ENCODE measurements at regions of chr6 and their contacts with region 1.

Region 1: GRCh38 chr6:75775219-75775618 is 26.2 kb downstream of the MYO6 start:
- DNase-seq: peak; percentile 19
- ATAC-seq: peak; percentile 48; the same call in 1 of the 2 replicates
- H3K4me3 ChIP-seq: no peak overlapping the region
- H3K27ac ChIP-seq: no peak overlapping the region
- H3K4me1 ChIP-seq: peaks cover 3% of the 10 kb centered on the region; the same call in 1 of the 2 replicates
- H3K27me3 ChIP-seq: no peaks in the 10 kb centered on the region
- CTCF ChIP-seq: no peak
- POLR2A ChIP-seq: no peak
- RAD21 ChIP-seq: no peak

Region 2: DNA sequence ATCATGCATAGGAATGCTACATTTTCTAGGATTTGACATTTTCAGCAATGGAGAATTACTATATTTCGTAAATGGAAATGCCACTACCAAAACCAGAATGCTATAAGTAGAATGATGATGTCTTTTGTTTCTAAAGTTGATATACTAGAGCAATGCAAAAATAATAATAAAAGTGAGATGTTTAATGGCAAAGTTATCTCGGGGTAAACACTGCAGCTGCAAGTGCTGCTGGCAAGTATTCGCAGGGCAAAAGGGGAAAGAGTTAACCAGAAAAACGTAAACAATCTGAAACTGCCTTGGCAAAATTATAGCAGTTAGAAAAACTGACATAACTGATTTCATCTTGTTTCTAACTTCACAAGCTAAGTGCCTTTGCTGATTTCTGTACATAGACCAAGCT is 236.1 kb before region 1 on chr6:
- CTCF ChIA-PET with region 1: no interaction called
- POLR2A ChIA-PET with region 1: no interaction called
- dilution Hi-C with region 1: no loop called
- in situ Hi-C with region 1: no loop called
- intact Hi-C with region 1: no loop called
- DNase-seq: peak; percentile 60
- ATAC-seq: peak; percentile 87
- H3K4me3 ChIP-seq: no peak overlapping the region
- H3K27ac ChIP-seq: no peak overlapping the region
- H3K4me1 ChIP-seq: no peaks in the 10 kb centered on the region; the same call in none of the 2 replicates
- H3K27me3 ChIP-seq: no peaks in the 10 kb centered on the region; the same call in 1 of the 2 replicates
- CTCF ChIP-seq: no peak
- POLR2A ChIP-seq: no peak
- RAD21 ChIP-seq: no peak

Region 3: GRCh38 chr6:75746221-75746620 is 29.0 kb before region 1 on chr6:
- CTCF ChIA-PET with region 1: no interaction called
- POLR2A ChIA-PET with region 1: no interaction called
- dilution Hi-C with region 1: no loop called
- in situ Hi-C with region 1: no loop called
- intact Hi-C with region 1: no loop called
- DNase-seq: no peak
- ATAC-seq: no peak
- H3K4me3 ChIP-seq: no peak overlapping the region
- H3K27ac ChIP-seq: no peak overlapping the region
- H3K4me1 ChIP-seq: no peaks in the 10 kb centered on the region
- H3K27me3 ChIP-seq: peaks cover 4% of the 10 kb centered on the region
- CTCF ChIP-seq: no peak
- POLR2A ChIP-seq: no peak
- RAD21 ChIP-seq: no peak

Region 4: DNA sequence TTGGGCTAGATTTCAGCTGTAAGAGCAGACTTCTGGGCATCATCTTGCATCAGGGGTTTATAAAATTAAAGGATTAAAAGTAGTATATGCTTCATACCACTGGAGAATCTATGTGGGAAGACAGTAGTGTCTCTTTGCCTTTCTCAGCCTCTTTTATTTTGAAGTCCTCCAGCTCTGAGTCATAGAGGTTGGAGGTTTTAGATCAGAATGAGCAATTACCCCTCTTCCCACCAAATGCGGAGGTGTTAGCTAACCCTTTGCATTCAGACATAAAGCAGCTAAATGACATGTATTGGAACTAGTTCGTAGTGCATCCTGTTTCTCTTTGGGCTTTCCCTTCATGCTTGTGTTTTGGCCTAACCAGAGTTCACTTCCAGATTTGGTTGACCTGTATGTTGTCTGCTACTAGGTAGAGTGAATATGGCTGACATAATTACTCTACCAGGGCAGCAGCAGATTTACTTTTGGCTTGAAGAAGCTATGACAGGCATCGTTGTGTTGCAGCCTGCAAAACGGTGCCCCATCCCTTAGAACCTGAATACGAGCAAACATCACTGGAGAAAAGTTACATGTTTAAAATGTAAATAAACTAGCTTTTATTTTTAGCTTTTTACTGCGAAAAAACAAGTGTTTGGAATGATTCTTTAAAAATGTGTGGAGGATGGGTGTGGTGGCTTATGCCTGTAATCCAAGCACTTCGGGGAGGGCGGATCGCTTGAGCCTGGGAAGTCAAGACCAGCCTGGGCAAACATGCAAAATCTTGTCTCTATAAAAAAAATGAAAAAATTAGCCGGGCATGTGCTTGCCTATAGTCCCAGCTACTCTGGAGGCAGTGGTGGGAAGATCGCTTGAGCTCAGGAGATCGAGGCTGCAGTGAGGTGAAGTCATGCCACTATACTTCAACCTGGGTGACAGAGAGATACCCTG is 56.0 kb after region 1 on chr6:
- CTCF ChIA-PET with region 1: no interaction called
- POLR2A ChIA-PET with region 1: no interaction called
- dilution Hi-C with region 1: no loop called
- in situ Hi-C with region 1: no loop called
- intact Hi-C with region 1: loop called (anchors 10 kb)
- DNase-seq: peak; percentile 77
- ATAC-seq: peak; percentile 61; the same call in 1 of the 2 replicates
- H3K4me3 ChIP-seq: no peak overlapping the region
- H3K27ac ChIP-seq: no peak overlapping the region
- H3K4me1 ChIP-seq: peaks cover 4% of the 10 kb centered on the region; the same call in 1 of the 2 replicates
- H3K27me3 ChIP-seq: no peaks in the 10 kb centered on the region
- CTCF ChIP-seq: no peak
- POLR2A ChIP-seq: no peak
- RAD21 ChIP-seq: no peak

Region 5: DNA sequence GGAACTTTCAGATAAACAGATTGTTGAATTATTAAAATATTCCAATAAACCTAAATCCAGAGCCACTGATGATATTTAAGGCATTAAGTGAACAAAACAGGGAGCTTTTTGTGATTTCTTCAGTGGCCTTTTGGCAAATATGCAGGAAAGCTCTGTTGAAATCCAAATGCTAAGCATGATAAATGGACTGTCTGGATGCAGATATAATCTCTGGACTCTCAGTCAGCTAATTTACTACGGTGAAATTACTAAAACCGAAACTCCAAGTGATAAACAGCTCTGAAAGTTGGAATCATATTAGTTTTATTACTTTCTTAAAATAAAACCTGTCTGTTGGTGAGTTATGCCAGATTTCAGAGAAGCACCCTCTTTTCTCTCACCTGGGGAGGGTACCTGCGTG is 176.9 kb after region 1 on chr6:
- CTCF ChIA-PET with region 1: no interaction called
- POLR2A ChIA-PET with region 1: no interaction called
- dilution Hi-C with region 1: no loop called
- in situ Hi-C with region 1: no loop called
- intact Hi-C with region 1: no loop called
- DNase-seq: no peak
- ATAC-seq: no peak
- H3K4me3 ChIP-seq: no peak overlapping the region
- H3K27ac ChIP-seq: no peak overlapping the region
- H3K4me1 ChIP-seq: no peaks in the 10 kb centered on the region
- H3K27me3 ChIP-seq: 0 out of 2 replicates have a peak, but pooled peaks cover 1% of the 10 kb centered on the region
- CTCF ChIP-seq: no peak
- POLR2A ChIP-seq: no peak
- RAD21 ChIP-seq: no peak

Measured in IMR-90 (cell line).